ENCODE measurements at regions of chr12 and their contacts with region 1.

Region 1: DNA sequence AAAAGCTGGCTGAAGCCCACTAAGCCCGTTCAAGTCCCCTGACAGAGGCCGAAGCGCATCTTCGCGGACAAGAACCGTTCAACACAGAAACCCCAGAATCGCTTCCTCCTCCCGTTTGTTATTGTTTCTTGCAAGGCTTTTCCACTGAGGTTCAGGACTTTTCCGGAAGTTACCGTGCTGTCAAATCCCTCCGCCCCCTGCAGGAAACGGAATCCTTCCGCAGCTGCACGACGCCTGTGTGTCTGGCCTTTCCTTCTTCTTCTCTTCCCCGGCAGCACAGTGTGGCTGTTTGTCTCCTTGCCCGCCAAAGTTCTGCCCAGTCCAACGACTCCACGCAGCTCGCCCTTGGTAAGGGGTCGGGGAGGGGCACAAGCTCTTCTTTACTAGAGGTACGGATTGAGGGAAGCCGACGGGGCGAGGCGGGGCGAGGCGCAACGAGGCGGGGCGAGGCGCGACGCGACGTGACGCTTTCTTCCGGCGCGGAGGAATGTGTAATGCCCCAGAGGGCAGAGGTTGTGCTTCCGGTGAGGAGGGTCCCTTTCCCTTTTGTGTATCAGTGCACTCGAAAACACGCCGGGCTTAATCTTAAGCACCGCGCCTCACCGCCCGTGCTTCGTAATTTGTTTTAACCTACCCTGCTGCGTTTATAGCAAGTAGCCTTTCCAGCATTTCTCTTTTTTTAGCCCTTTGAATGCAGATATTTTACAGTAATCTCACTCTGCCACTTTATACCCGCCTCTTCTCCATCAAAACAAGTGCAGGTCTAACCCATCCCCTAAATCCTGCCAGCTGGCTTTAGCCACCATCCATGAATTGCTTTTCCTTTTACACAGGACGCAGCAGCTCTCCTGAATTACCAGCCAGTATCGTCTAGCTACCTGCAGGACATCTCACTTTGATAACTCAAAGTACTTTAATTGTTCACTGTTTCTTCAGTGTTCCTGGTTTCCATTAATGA is at the start of gene KDM5A:
- DNase-seq: peak; percentile 94
- H3K4me3 Mint-ChIP-seq: peak within 1 kb of the TSS; percentile 86
- H3K27ac Mint-ChIP-seq: peak within 1 kb of the TSS; percentile 96
- H3K4me1 Mint-ChIP-seq: peaks cover 6% of the 10 kb centered on the region
- H3K27me3 Mint-ChIP-seq: no peaks in the 10 kb centered on the region
- CTCF ChIP-seq: no peak
- total RNA-seq, gene KDM5A: 58.0 and 71.6 TPM in 2 replicates

Region 2: GRCh38 chr12:401235-402028 is 12.0 kb after region 1 on chr12 and contains the start of gene CCDC77:
- CTCF ChIA-PET with region 1: interaction called, 7 read pairs
- POLR2A ChIA-PET with region 1: interaction called, 142 read pairs
- intact Hi-C with region 1: no loop called
- DNase-seq: peak; percentile 95
- H3K4me3 Mint-ChIP-seq: no peak within 1 kb of the TSS
- H3K27ac Mint-ChIP-seq: no peak within 1 kb of the TSS
- H3K4me1 Mint-ChIP-seq: peaks cover 11% of the 10 kb centered on the region
- H3K27me3 Mint-ChIP-seq: no peaks in the 10 kb centered on the region
- CTCF ChIP-seq: peak; percentile 6
- total RNA-seq, gene CCDC77: 5.5 and 7.2 TPM in 2 replicates

Region 3: GRCh38 chr12:414859-415258 is 25.4 kb after region 1 on chr12:
- CTCF ChIA-PET with region 1: interaction called, 3 read pairs
- POLR2A ChIA-PET with region 1: interaction called, 11 read pairs
- intact Hi-C with region 1: no loop called
- DNase-seq: no peak
- H3K4me3 Mint-ChIP-seq: no peak overlapping the region
- H3K27ac Mint-ChIP-seq: peak overlapping the region; percentile 1
- H3K4me1 Mint-ChIP-seq: no peaks in the 10 kb centered on the region
- H3K27me3 Mint-ChIP-seq: no peaks in the 10 kb centered on the region
- CTCF ChIP-seq: no peak